Panc1 (cell line): ENCODE measurements at regions of chr7 and their contacts with region 1.

Region 1: DNA sequence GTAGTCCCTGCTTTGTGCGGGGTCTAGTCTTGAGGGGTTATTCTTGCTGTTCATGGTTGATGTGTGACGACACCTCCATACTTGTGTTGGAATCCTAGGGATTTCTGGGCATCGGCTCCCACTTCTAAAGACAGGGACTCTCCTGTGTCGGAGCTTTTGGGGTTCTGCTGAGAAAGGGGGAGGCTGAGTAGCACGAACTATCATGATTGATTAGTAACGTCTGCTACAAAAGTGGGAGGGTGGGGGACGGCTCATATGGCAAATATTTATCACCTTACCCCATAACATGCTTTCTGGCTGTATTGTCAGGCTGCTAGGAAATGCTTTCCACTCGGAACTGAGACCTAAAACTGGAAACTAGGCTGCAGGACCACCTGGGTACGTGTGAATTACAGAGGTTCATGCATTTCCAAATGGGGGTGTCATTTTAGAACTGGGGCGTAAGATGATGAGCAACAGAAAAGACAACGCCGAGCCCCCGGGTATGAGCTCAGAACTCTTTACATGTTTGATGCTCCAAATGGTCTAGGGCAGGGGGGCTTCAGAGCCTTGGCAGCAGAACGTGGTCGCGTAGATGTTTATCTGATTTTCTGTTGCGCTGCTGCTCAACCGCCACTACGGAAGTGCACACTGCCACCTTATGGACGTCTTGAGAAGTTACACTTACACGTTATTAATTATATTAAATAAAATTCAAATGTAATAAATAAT is 15.1 kb upstream of the NME8 start:
- DNase-seq: no peak
- ATAC-seq: no peak
- H3K4me3 ChIP-seq: peak overlapping the region in 1 of 2 experiments; percentile 37; a peak in 2 of 4 replicates
- H3K27ac ChIP-seq: no peak overlapping the region
- H3K4me1 ChIP-seq: peaks cover 4% of the 10 kb centered on the region; the same call in 1 of the 2 replicates
- H3K27me3 ChIP-seq: no peaks in the 10 kb centered on the region; the same call in none of the 2 replicates
- CTCF ChIP-seq: peak; percentile 89

Region 2: GRCh38 chr7:37510043-37510634 is 323.1 kb before region 1 on chr7:
- CTCF ChIA-PET with region 1: no interaction called
- POLR2A ChIA-PET with region 1: no interaction called
- in situ Hi-C with region 1: no loop called
- intact Hi-C with region 1: loop called (anchors 10 kb)
- DNase-seq: peak; percentile 22
- ATAC-seq: no peak
- H3K4me3 ChIP-seq: no peak overlapping the region
- H3K27ac ChIP-seq: no peak overlapping the region
- H3K4me1 ChIP-seq: no peaks in the 10 kb centered on the region
- H3K27me3 ChIP-seq: no peaks in the 10 kb centered on the region; the same call in none of the 2 replicates
- CTCF ChIP-seq: peak; percentile 77; the same call in 1 of the 2 replicates

Region 3: GRCh38 chr7:38465956-38466355 is 632.7 kb after region 1 on chr7:
- CTCF ChIA-PET with region 1: no interaction called
- POLR2A ChIA-PET with region 1: no interaction called
- in situ Hi-C with region 1: no loop called
- intact Hi-C with region 1: no loop called
- DNase-seq: no peak
- ATAC-seq: no peak
- H3K4me3 ChIP-seq: no peak overlapping the region
- H3K27ac ChIP-seq: no peak overlapping the region
- H3K4me1 ChIP-seq: no peaks in the 10 kb centered on the region
- H3K27me3 ChIP-seq: peaks cover 5% of the 10 kb centered on the region; the same call in 1 of the 2 replicates
- CTCF ChIP-seq: no peak